MCF 10A (cell line): ENCODE measurements at regions of chr1 and their contacts with region 1.

Region 1: DNA sequence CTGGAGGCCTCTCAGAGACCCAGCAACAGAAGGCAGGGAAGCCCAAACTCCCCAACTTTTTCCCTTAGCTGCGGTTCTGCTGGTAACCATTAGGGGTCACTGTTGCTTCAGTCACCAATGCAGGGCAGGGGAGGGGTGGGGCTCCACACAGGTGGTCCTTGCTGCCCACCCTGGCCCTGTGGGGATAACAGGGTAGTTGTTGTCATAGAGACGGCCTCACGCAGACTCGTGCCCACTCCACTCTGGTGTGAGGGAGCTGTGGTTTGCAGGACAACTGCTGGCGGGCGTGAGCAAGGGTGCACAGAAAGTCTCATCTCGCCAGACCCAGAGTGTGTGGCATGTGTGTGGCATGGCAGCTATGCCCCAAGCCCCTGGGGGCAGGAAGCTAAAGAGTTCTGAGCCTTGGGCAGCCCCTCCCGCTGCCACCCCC is 19.9 kb downstream of the INSRR start:
- DNase-seq: peak; percentile 60
- H3K4me3 Mint-ChIP-seq: no peak overlapping the region
- H3K27ac Mint-ChIP-seq: no peak overlapping the region
- H3K4me1 Mint-ChIP-seq: no peaks in the 10 kb centered on the region
- H3K27me3 Mint-ChIP-seq: peaks cover 32% of the 10 kb centered on the region
- CTCF ChIP-seq: peak; percentile 93

Region 2: GRCh38 chr1:156383023-156383422 is 456.0 kb before region 1 on chr1:
- CTCF ChIA-PET with region 1: no interaction called
- POLR2A ChIA-PET with region 1: no interaction called
- intact Hi-C with region 1: no loop called
- DNase-seq: peak; percentile 80
- H3K4me3 Mint-ChIP-seq: no peak overlapping the region
- H3K27ac Mint-ChIP-seq: no peak overlapping the region
- H3K4me1 Mint-ChIP-seq: peaks cover 11% of the 10 kb centered on the region
- H3K27me3 Mint-ChIP-seq: no peaks in the 10 kb centered on the region
- CTCF ChIP-seq: peak; percentile 94

Region 3: GRCh38 chr1:156767101-156767878 is 71.7 kb before region 1 on chr1 and contains the start of gene PRCC:
- CTCF ChIA-PET with region 1: interaction called, 11 read pairs
- POLR2A ChIA-PET with region 1: no interaction called
- intact Hi-C with region 1: no loop called
- DNase-seq: peak; percentile 100
- H3K4me3 Mint-ChIP-seq: no peak within 1 kb of the TSS
- H3K27ac Mint-ChIP-seq: no peak within 1 kb of the TSS
- H3K4me1 Mint-ChIP-seq: peaks cover 36% of the 10 kb centered on the region
- H3K27me3 Mint-ChIP-seq: no peaks in the 10 kb centered on the region
- CTCF ChIP-seq: no peak
- total RNA-seq, gene PRCC: 112 and 131 TPM in 2 replicates

Region 4: DNA sequence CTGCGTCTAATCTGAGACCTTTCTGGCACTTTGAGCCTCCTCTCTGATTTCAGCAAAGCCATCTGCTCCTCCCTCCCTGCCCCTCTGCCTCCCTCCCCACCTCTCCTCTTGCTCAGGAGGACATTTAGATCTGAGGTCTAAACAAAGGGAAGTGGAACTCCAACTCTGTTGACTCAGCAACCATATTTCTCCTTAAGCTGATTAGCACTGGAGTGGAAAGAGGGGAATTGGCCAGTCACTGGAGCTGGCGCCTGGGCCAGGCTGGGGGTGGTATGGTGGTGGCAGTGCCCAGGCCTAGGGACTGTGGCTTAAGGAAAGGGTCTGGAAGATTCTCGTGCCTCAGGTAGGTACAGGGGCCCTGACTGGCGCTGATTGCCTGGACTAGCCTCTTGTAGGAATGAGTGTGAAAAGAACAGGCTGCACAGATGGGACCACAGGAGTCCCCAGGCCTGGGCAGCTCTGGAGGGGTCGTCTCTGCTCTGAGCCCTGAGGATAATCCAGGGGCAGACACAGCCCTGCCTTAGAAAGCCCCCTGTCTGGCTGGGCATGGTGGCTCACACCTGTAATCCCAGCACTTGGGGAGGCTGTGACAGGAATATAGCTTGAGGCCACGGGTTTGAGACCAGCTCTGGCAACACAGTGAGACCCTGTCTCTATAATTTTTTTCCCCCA is 34.3 kb before region 1 on chr1:
- CTCF ChIA-PET with region 1: interaction called, 79 read pairs
- POLR2A ChIA-PET with region 1: interaction called, 3 read pairs
- intact Hi-C with region 1: no loop called
- DNase-seq: no peak
- H3K4me3 Mint-ChIP-seq: no peak overlapping the region
- H3K27ac Mint-ChIP-seq: no peak overlapping the region
- H3K4me1 Mint-ChIP-seq: peaks cover 12% of the 10 kb centered on the region
- H3K27me3 Mint-ChIP-seq: no peaks in the 10 kb centered on the region
- CTCF ChIP-seq: no peak

Region 5: GRCh38 chr1:156821801-156822200 is 17.2 kb before region 1 on chr1:
- CTCF ChIA-PET with region 1: interaction called, 185 read pairs
- POLR2A ChIA-PET with region 1: no interaction called
- intact Hi-C with region 1: no loop called
- DNase-seq: peak; percentile 41
- H3K4me3 Mint-ChIP-seq: no peak overlapping the region
- H3K27ac Mint-ChIP-seq: no peak overlapping the region
- H3K4me1 Mint-ChIP-seq: peaks cover 18% of the 10 kb centered on the region
- H3K27me3 Mint-ChIP-seq: no peaks in the 10 kb centered on the region
- CTCF ChIP-seq: no peak

Region 6: DNA sequence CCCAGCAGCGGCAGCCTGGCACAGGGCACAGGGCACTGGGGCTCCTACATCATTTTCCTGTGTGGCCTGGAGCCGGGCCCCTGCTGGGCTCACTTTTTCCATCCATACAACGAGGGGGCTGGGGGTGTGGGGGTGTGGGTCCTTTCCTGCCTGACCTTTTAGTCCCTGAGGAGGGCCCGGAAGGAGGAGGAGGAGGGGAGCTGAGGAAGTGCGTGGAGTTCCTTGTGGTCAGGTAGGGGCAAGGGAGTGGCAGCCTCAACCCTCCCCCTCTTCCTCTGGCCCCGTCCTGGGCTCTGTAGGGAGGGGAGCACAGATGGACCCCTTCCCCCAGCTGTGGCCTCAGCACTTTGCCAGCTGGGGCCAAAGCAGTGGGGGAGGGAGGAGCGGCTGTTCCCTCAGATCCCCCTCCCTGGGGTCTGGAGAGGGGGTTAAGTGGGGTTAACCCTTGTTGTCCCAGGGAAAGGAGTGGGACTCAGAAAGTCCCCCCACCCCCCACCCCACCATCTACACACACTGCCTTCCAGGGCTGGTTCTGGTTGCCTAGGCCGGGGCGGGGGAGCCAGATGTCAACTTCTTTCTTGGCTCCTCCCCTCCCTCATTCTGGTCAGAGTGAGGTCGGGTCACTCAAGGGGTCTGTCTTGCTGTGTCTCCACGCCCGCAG is 27.4 kb after region 1 on chr1:
- CTCF ChIA-PET with region 1: interaction called, 353 read pairs
- POLR2A ChIA-PET with region 1: no interaction called
- intact Hi-C with region 1: no loop called
- DNase-seq: no peak
- H3K4me3 Mint-ChIP-seq: no peak overlapping the region
- H3K27ac Mint-ChIP-seq: no peak overlapping the region
- H3K4me1 Mint-ChIP-seq: peaks cover 23% of the 10 kb centered on the region
- H3K27me3 Mint-ChIP-seq: peaks cover 18% of the 10 kb centered on the region
- CTCF ChIP-seq: no peak

Region 7: DNA sequence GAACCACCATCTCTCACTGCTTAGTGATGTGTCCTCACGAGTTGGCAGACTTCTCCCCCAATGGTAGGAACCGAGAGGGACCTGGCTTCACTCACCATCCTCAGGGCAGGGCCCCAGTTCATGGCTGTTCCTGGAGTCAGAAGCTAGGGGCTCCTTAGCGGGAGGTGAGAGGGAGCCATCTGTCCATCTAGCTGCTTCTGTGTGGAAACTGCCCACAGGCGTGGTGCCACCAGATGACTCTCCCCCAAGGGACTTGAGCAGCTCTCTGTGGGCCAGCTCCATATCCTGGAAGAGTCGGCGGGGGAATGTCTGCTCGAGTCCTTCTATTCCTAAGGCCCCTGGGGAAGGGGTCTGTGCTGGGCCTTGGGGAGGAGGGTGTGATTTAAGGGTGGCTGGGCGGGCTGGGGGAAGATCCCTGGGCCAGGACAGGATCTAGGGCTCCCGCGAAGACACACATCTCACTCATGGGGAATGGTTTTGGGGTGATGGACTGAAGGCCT is 97.8 kb after region 1 on chr1:
- CTCF ChIA-PET with region 1: interaction called, 21 read pairs
- POLR2A ChIA-PET with region 1: no interaction called
- intact Hi-C with region 1: no loop called
- DNase-seq: no peak
- H3K4me3 Mint-ChIP-seq: no peak overlapping the region
- H3K27ac Mint-ChIP-seq: no peak overlapping the region
- H3K4me1 Mint-ChIP-seq: no peaks in the 10 kb centered on the region
- H3K27me3 Mint-ChIP-seq: no peaks in the 10 kb centered on the region
- CTCF ChIP-seq: no peak

Region 8: DNA sequence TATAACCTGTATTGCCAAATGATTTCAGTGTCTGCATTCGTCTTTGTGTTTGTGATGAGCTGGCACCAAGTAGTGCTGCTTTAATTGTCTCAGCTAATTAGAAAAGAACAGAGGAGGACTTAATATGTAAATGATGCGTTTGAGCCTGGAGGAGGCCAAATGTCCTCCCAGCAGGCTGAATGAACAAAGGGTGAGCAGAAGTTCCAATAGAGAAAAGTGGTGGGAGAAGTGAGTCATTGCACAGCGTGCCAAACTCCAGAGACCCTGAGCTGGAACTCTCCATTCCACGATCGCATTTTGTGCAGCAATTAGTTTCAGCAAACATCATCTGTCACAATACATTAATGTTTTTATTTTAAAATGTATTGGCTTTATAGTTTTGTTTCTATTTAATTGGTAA is 242.7 kb after region 1 on chr1:
- CTCF ChIA-PET with region 1: no interaction called
- POLR2A ChIA-PET with region 1: no interaction called
- intact Hi-C with region 1: no loop called
- DNase-seq: no peak
- H3K4me3 Mint-ChIP-seq: no peak overlapping the region
- H3K27ac Mint-ChIP-seq: no peak overlapping the region
- H3K4me1 Mint-ChIP-seq: no peaks in the 10 kb centered on the region
- H3K27me3 Mint-ChIP-seq: peaks cover 23% of the 10 kb centered on the region
- CTCF ChIP-seq: no peak

Region 9: GRCh38 chr1:157407917-157408525 is 569.0 kb after region 1 on chr1:
- CTCF ChIA-PET with region 1: no interaction called
- POLR2A ChIA-PET with region 1: no interaction called
- intact Hi-C with region 1: no loop called
- DNase-seq: no peak
- H3K4me3 Mint-ChIP-seq: no peak overlapping the region
- H3K27ac Mint-ChIP-seq: no peak overlapping the region
- H3K4me1 Mint-ChIP-seq: peaks cover 4% of the 10 kb centered on the region
- H3K27me3 Mint-ChIP-seq: no peaks in the 10 kb centered on the region
- CTCF ChIP-seq: no peak